Sciatic nerve (tissue), 2 donors: ENCODE measurements at regions of chr11 and their contacts with region 1.

Region 1: GRCh38 chr11:70580036-70580845 is 181.9 kb downstream of the CTTN start:
- DNase-seq: peak; percentile 36
- ATAC-seq: no peak

Region 2: GRCh38 chr11:70244698-70245097 is 335.5 kb before region 1 on chr11:
- intact Hi-C with region 1: no loop called
- DNase-seq: no peak
- ATAC-seq: no peak

Region 3: DNA sequence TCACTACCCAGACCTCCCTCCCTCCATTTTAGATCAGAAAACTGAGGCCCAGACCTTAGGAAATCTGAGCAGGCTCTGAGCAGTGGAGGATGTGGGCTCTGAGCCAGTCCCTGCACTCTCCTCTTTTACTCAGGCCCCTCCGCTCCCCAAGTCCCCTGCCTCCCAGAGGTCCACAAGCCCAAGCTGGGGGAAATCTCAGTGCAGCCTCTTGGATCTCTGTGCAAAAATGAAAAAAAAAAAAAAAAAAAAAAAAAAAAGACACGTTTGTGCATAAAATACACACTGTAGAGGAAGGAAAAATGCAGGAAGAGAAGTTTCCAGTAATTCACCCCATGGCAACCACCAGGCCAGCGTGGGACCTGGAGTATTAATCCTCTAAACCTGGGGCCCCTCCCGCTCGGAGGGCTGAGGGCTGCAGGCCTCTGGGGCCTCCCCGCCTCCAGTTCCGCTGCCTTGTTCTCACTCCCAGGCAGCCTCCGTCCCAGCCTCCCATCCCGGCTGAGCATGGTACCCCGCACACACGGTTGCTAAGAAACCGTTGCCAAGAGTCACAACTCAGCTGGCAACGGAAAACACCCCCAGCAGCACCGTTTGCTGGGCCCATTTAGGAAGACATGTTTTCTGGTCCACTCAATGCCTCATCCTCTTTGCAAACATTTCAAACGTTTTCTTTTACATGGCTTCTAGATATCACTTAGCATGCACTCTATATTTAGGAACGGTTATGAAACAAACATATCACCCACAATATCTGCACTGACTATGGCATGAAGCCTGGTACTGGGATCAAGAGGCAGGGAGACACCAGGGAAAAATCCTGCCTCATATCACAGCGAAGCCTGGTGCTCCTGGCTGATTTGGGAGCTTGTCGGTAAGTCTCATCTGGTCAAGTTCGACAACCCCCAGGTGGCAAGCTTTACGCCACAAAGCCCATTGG is 45.6 kb after region 1 on chr11:
- intact Hi-C with region 1: no loop called
- DNase-seq: no peak
- ATAC-seq: no peak

Region 4: DNA sequence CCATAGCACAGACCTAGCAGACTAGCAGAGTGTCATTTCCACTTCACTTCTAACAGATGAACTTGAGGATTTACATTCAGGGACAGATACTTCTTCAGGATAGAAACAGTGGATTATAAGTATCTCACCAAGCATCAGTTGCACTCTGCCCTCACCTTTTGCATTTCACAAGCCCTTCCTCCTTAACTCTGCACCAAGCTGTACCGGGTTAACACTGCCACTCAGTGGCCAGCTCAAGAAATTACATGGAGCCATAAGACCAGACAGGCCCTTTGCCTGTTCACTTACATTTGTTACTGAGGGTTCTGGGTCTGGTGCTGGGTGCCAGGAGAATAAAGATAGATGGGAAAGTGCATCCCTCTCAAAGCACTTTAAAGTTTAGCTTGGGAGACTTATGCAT is 362.4 kb after region 1 on chr11:
- intact Hi-C with region 1: no loop called
- DNase-seq: no peak
- ATAC-seq: no peak

Region 5: DNA sequence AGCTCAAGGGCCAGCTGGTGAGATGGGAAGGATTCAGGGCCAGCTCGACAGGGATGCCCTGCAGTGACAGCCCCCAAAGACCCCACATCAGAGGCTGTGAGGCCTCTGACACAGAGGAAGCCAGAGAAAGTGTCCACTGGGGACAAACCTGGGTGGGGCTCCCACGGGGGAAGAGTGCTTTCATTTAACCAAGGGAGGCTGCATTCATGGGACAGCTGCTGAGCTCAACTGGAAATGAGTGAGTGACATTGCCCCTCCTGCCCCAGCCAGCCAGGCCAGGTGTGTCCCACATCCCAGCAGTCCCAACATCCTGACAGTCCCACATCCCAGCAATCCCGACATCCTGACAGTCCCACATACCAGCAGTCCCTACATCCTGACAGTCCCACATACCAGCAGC is 807.0 kb after region 1 on chr11:
- intact Hi-C with region 1: loop called (anchors 2 kb)
- DNase-seq: no peak
- ATAC-seq: no peak

Region 6: GRCh38 chr11:71425855-71426254 is 845.6 kb after region 1 on chr11:
- intact Hi-C with region 1: no loop called
- DNase-seq: no peak
- ATAC-seq: no peak